WTC11 (cell line): ENCODE measurements at regions of chr16 and their contacts with region 1.

Region 1: GRCh38 chr16:50210266-50211038 is 55.9 kb upstream of the ADCY7 start:
- DNase-seq: peak; percentile 74
- ATAC-seq: peak; percentile 95
- H3K4me3 Mint-ChIP-seq: no peak overlapping the region
- H3K27ac Mint-ChIP-seq: peak overlapping the region; percentile 93
- H3K4me1 Mint-ChIP-seq: peaks cover 18% of the 10 kb centered on the region
- H3K27me3 Mint-ChIP-seq: no peaks in the 10 kb centered on the region
- CTCF ChIP-seq: no peak

Region 2: GRCh38 chr16:50024684-50025536 is 185.5 kb before region 1 on chr16 and contains the start of gene CNEP1R1:
- CTCF ChIA-PET with region 1: interaction called, 102 read pairs
- POLR2A ChIA-PET with region 1: no interaction called
- DNase-seq: peak; percentile 95
- ATAC-seq: peak; percentile 95
- H3K4me3 Mint-ChIP-seq: peak within 1 kb of the TSS; percentile 92
- H3K27ac Mint-ChIP-seq: peak within 1 kb of the TSS; percentile 46
- H3K4me1 Mint-ChIP-seq: peaks cover 16% of the 10 kb centered on the region
- H3K27me3 Mint-ChIP-seq: no peaks in the 10 kb centered on the region
- CTCF ChIP-seq: peak; percentile 92
- total RNA-seq, gene CNEP1R1: 13.2 to 13.8 TPM (median 13.7 TPM) in 3 replicates

Region 3: GRCh38 chr16:50136399-50136798 is 74.1 kb before region 1 on chr16:
- CTCF ChIA-PET with region 1: interaction called, 96 read pairs
- POLR2A ChIA-PET with region 1: no interaction called
- DNase-seq: no peak
- ATAC-seq: peak; percentile 57; the same call in 1 of the 2 replicates
- H3K4me3 Mint-ChIP-seq: no peak overlapping the region
- H3K27ac Mint-ChIP-seq: no peak overlapping the region
- H3K4me1 Mint-ChIP-seq: no peaks in the 10 kb centered on the region
- H3K27me3 Mint-ChIP-seq: no peaks in the 10 kb centered on the region; the same call in 1 of the 2 replicates
- CTCF ChIP-seq: no peak

Region 4: DNA sequence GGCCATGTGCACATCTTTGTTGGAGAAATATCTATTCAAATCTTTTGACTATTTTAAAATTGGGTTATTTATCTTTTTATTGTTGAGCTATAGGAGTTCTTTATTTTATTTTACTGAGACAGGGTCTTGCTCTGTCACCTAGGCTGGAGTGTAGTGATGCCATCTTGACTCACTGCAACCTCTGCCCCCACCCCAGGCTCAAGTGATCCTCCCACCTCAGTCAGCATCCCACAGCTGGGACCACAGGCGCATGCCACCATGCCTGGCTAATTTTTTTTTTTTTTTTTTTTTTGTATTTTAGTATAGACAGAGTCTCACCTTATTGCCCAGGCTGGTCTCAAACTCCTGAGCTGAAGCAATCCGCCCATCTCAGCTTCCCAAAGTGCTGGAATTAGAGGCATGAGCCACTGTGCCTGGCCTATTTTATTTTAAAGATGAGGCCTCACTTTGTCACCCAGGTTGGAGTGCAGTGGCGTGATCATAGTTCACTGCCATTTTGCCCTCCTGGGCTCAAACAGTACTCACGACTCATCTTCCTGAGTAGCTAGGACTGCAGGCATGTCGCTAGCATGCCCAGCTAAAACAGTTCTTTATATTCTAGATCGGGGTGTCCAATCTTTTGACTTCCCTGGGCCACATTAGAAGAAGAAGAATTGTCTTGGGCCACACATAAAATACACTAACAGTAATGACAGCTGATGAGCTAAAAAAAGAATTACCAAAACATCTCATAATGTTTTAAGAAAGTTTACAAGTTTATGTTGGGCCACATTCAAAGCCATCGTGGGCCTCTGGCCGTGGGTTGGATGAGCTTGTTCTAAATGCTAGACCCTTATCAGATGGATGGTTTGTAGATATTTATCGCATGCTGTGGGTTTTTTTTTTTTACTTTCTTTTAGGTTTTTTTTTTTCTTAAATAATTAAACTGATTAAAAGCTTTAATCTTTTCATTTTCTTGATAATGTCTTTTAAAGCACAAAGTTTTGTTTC is 43.6 kb before region 1 on chr16:
- CTCF ChIA-PET with region 1: interaction called, 17 read pairs
- POLR2A ChIA-PET with region 1: no interaction called
- DNase-seq: no peak
- ATAC-seq: no peak
- H3K4me3 Mint-ChIP-seq: no peak overlapping the region
- H3K27ac Mint-ChIP-seq: peak overlapping the region; percentile 36
- H3K4me1 Mint-ChIP-seq: peaks cover 20% of the 10 kb centered on the region
- H3K27me3 Mint-ChIP-seq: no peaks in the 10 kb centered on the region
- CTCF ChIP-seq: no peak

Region 5: DNA sequence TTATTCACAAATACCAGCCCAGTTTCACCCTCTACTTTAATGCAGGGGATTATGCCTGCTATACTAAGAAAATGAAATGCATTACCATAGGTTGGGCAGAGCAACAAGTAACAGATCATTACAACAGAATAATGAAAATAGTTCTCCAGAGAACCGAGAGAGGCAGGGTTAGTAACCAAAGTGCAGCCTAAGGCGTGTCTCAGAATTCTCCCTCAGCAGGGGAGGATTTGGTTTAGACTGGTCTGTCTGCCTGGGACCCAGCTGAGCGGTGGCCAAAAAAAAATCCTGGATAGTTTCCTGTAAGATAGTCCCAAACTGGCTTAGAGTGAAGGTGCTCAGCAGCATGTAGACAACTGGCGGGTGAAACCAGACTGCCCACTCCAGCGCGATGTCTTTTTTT is 25.1 kb after region 1 on chr16:
- CTCF ChIA-PET with region 1: interaction called, 12 read pairs
- POLR2A ChIA-PET with region 1: no interaction called
- DNase-seq: no peak
- ATAC-seq: peak; percentile 47
- H3K4me3 Mint-ChIP-seq: no peak overlapping the region
- H3K27ac Mint-ChIP-seq: no peak overlapping the region
- H3K4me1 Mint-ChIP-seq: peaks cover 7% of the 10 kb centered on the region
- H3K27me3 Mint-ChIP-seq: peaks cover 4% of the 10 kb centered on the region
- CTCF ChIP-seq: no peak

Region 6: DNA sequence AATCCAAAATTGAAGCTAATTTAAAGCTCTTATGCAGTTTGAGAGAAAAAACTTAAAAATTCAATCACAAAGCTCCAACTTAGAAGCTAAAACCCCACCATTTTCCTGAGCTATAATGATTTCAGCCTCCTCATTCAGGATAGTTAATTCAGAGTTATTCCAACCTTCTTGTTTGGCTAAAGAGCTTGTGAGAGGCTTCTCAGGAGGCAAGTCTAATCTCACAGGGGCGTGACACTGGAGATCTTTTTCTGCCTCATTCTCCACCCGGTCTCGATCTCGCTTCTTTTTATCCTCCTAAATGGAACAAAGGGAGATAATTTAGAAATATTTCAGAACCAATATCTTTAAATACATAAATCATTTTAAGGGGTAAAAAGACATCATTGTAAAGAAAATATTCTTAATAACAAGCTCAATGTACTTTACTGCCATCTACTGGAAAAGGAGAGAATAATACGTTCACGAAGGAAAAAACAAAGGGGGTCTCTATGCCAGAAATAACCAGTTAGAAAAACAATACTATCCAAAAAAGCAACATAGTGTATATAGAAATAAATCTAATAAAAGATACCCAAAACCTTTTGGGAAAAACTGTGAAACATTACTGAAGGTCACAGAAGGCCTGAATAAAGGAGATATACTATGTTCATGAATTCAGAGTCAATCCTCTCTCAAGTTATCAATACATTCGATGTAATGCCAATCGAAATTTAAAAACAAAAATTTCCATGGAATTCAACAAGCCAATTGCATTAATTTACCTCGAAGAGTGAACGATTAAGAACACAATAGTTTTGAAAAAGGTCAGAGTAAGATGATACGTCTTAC is 144.4 kb after region 1 on chr16:
- CTCF ChIA-PET with region 1: interaction called, 11 read pairs
- POLR2A ChIA-PET with region 1: no interaction called
- DNase-seq: no peak
- ATAC-seq: no peak
- H3K4me3 Mint-ChIP-seq: no peak overlapping the region
- H3K27ac Mint-ChIP-seq: peak overlapping the region; percentile 25; the same call in 1 of the 2 replicates
- H3K4me1 Mint-ChIP-seq: peaks cover 3% of the 10 kb centered on the region; the same call in 1 of the 2 replicates
- H3K27me3 Mint-ChIP-seq: no peaks in the 10 kb centered on the region
- CTCF ChIP-seq: no peak

Region 7: GRCh38 chr16:50425648-50426047 is 215.2 kb after region 1 on chr16:
- CTCF ChIA-PET with region 1: no interaction called
- POLR2A ChIA-PET with region 1: no interaction called
- DNase-seq: no peak
- ATAC-seq: no peak
- H3K4me3 Mint-ChIP-seq: no peak overlapping the region
- H3K27ac Mint-ChIP-seq: no peak overlapping the region
- H3K4me1 Mint-ChIP-seq: no peaks in the 10 kb centered on the region; the same call in 1 of the 2 replicates
- H3K27me3 Mint-ChIP-seq: no peaks in the 10 kb centered on the region
- CTCF ChIP-seq: no peak